HCT116 (cell line): ENCODE measurements at regions of chr2 and their contacts with region 1.

Region 1: GRCh38 chr2:191218292-191218898 is 26.8 kb upstream of the MYO1B start:
- DNase-seq: peak; percentile 67
- ATAC-seq: peak; percentile 92
- H3K4me3 ChIP-seq: no peak overlapping the region
- H3K27ac ChIP-seq: no peak overlapping the region
- H3K4me1 ChIP-seq: peaks cover 10 to 27% of the 10 kb centered on the region in 2 experiments; a peak in 3 of 4 replicates
- H3K27me3 ChIP-seq: no peaks in the 10 kb centered on the region
- CTCF ChIP-seq: peak; percentile 73 to 90 (median 76)
- POLR2A ChIP-seq: no peak
- RAD21 ChIP-seq: peak; percentile 83

Region 2: GRCh38 chr2:190947711-190948251 is 270.6 kb before region 1 on chr2:
- CTCF ChIA-PET with region 1: no interaction called
- POLR2A ChIA-PET with region 1: no interaction called
- RAD21 ChIA-PET with region 1: no interaction called
- intact Hi-C with region 1: no loop called
- DNase-seq: peak; percentile 49
- ATAC-seq: peak; percentile 82
- H3K4me3 ChIP-seq: peak overlapping the region in 1 of 2 experiments; percentile 43; a peak in 3 of 4 replicates
- H3K27ac ChIP-seq: peak overlapping the region; percentile 59; the same call in 1 of the 2 replicates
- H3K4me1 ChIP-seq: peaks cover 32 to 33% of the 10 kb centered on the region in 2 experiments
- H3K27me3 ChIP-seq: no peaks in the 10 kb centered on the region
- CTCF ChIP-seq: 0 out of 6 replicates have a peak, but pooled peaks have one; percentile 4 to 27 (median 11)
- POLR2A ChIP-seq: no peak
- RAD21 ChIP-seq: peak; percentile 39

Region 3: GRCh38 chr2:191231995-191232394 is 13.6 kb after region 1 on chr2:
- CTCF ChIA-PET with region 1: interaction called, 13 read pairs
- POLR2A ChIA-PET with region 1: no interaction called
- RAD21 ChIA-PET with region 1: no interaction called
- intact Hi-C with region 1: no loop called
- DNase-seq: no peak
- ATAC-seq: no peak
- H3K4me3 ChIP-seq: no peak overlapping the region
- H3K27ac ChIP-seq: no peak overlapping the region
- H3K4me1 ChIP-seq: peaks cover 0 to 8% of the 10 kb centered on the region in 2 experiments; a peak in 1 of 4 replicates
- H3K27me3 ChIP-seq: no peaks in the 10 kb centered on the region
- CTCF ChIP-seq: peak; percentile 23 to 53 (median 40); a peak in 4 of 6 replicates
- POLR2A ChIP-seq: no peak
- RAD21 ChIP-seq: peak; percentile 68

Region 4: DNA sequence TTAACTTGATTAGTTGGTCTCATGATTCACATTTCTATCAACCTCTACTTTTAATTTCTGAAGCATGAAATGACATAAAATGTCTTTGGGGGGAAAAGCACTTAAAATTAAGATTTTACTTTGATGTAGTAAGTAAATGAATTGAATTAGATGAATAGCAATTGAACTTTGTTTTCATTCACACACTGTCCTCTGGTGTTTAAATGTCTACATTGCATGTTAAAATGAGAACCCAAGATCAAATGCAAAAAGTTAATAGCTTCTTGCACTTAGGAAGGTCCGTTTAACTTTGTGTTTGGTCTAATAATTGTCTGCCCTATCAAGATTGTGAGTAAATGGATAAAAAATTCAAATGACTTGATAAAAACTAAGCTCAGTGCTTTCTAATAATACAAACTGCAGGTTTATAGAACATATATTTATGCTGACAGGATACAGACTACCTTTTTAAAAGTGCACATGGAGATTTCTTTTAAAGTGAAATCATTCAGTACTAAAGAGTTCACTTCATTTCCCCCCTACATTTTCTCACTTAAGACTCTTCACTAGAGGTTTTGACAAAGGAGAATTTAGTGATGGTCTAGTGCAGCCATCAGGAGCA is 303.3 kb after region 1 on chr2:
- CTCF ChIA-PET with region 1: interaction called, 17 read pairs
- POLR2A ChIA-PET with region 1: no interaction called
- RAD21 ChIA-PET with region 1: interaction called, 3 to 4 read pairs
- intact Hi-C with region 1: loop called (anchors 1 kb)
- DNase-seq: peak; percentile 26
- ATAC-seq: no peak
- H3K4me3 ChIP-seq: no peak overlapping the region
- H3K27ac ChIP-seq: no peak overlapping the region
- H3K4me1 ChIP-seq: no peaks in the 10 kb centered on the region
- H3K27me3 ChIP-seq: no peaks in the 10 kb centered on the region
- CTCF ChIP-seq: peak; percentile 64 to 84 (median 79)
- POLR2A ChIP-seq: no peak
- RAD21 ChIP-seq: peak; percentile 87

Region 5: DNA sequence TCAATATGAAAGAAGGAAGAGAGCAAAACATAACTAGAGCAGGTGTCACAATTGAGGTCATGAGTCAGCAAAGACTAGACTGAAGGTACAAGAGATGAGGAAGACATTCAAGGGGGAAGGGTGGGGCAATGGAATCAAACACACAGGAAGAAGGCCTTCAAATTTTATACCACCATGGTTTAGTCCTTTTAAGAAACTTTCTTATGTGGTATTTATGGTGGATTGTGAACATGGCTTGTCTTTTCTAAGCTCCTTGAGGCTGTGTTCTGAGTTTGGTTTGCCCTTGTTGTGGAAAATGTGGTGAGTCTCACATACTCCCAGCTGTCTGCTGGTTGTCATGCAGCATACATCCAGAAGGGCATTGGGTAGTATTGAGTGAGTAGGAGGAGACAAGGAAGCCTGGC is 521.6 kb after region 1 on chr2:
- CTCF ChIA-PET with region 1: no interaction called
- POLR2A ChIA-PET with region 1: no interaction called
- RAD21 ChIA-PET with region 1: no interaction called
- intact Hi-C with region 1: no loop called
- DNase-seq: no peak
- ATAC-seq: peak; percentile 67
- H3K4me3 ChIP-seq: no peak overlapping the region
- H3K27ac ChIP-seq: no peak overlapping the region
- H3K4me1 ChIP-seq: no peaks in the 10 kb centered on the region
- H3K27me3 ChIP-seq: no peaks in the 10 kb centered on the region
- CTCF ChIP-seq: no peak
- POLR2A ChIP-seq: no peak
- RAD21 ChIP-seq: no peak